Naive thymus-derived CD4-positive, alpha-beta T cell (primary cell): ENCODE measurements at regions of chr20 and their contacts with region 1.

Region 1: GRCh38 chr20:13661070-13661685 is 22.4 kb upstream of the TASP1 start:
- DNase-seq: no peak
- ATAC-seq: no peak
- H3K4me3 ChIP-seq: no peak overlapping the region
- H3K4me3 Mint-ChIP-seq: no peak overlapping the region
- H3K27ac ChIP-seq: no peak overlapping the region
- H3K27ac Mint-ChIP-seq: no peak overlapping the region
- H3K4me1 ChIP-seq: no peaks in the 10 kb centered on the region
- H3K4me1 Mint-ChIP-seq: no peaks in the 10 kb centered on the region
- H3K27me3 ChIP-seq: no peaks in the 10 kb centered on the region
- H3K27me3 Mint-ChIP-seq: peaks cover 0 to 39% (median 28%) of the 10 kb centered on the region in 5 donors

Region 2: GRCh38 chr20:13131688-13132087 is 529.5 kb before region 1 on chr20:
- CTCF ChIA-PET with region 1: no interaction called
- POLR2A ChIA-PET with region 1: no interaction called
- intact Hi-C with region 1: no loop called
- DNase-seq: no peak
- ATAC-seq: no peak
- H3K4me3 ChIP-seq: no peak overlapping the region
- H3K4me3 Mint-ChIP-seq: no peak overlapping the region
- H3K27ac ChIP-seq: no peak overlapping the region
- H3K27ac Mint-ChIP-seq: peak overlapping the region in 1 of 9 donors; percentile 13
- H3K4me1 ChIP-seq: no peaks in the 10 kb centered on the region
- H3K4me1 Mint-ChIP-seq: peaks cover 0 to 3% (median 0%) of the 10 kb centered on the region in 7 donors
- H3K27me3 ChIP-seq: no peaks in the 10 kb centered on the region
- H3K27me3 Mint-ChIP-seq: peaks cover 0 to 7% (median 0%) of the 10 kb centered on the region in 5 donors

Region 3: GRCh38 chr20:13610184-13610583 is 51.0 kb before region 1 on chr20:
- CTCF ChIA-PET with region 1: no interaction called
- POLR2A ChIA-PET with region 1: no interaction called
- intact Hi-C with region 1: loop called in 1 of 2 experiments (anchors 10 kb)
- DNase-seq: no peak
- ATAC-seq: peak; percentile 40
- H3K4me3 ChIP-seq: no peak overlapping the region
- H3K4me3 Mint-ChIP-seq: no peak overlapping the region
- H3K27ac ChIP-seq: no peak overlapping the region
- H3K27ac Mint-ChIP-seq: no peak overlapping the region
- H3K4me1 ChIP-seq: no peaks in the 10 kb centered on the region
- H3K4me1 Mint-ChIP-seq: peaks cover 0 to 6% (median 0%) of the 10 kb centered on the region in 7 donors
- H3K27me3 ChIP-seq: no peaks in the 10 kb centered on the region
- H3K27me3 Mint-ChIP-seq: no peaks in the 10 kb centered on the region

Region 4: DNA sequence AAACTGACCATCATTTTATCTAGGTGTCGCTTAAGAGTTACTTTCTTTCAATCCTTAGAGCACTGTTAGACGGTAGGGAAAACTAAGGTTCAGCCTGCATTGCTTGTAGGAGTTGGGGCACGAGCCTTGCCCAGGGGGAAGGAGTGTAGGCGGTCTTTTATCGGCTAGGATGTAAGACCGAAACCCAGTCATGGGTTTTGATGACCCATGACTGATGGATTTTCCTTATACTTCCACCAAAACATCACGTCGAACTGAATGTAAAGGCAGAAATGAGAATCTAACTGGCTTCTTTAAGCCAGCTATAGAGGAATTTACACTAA is 22.0 kb before region 1 on chr20:
- CTCF ChIA-PET with region 1: no interaction called
- POLR2A ChIA-PET with region 1: no interaction called
- intact Hi-C with region 1: no loop called
- DNase-seq: no peak
- ATAC-seq: no peak
- H3K4me3 ChIP-seq: peak overlapping the region; percentile 71
- H3K4me3 Mint-ChIP-seq: peak overlapping the region; percentile 85 to 94 (median 90)
- H3K27ac ChIP-seq: peak overlapping the region; percentile 27
- H3K27ac Mint-ChIP-seq: peak overlapping the region; percentile 37 to 95 (median 83)
- H3K4me1 ChIP-seq: peaks cover 0 to 7% of the 10 kb centered on the region in 2 donors
- H3K4me1 Mint-ChIP-seq: peaks cover 1 to 31% (median 27%) of the 10 kb centered on the region in 7 donors
- H3K27me3 ChIP-seq: no peaks in the 10 kb centered on the region
- H3K27me3 Mint-ChIP-seq: peaks cover 0 to 12% (median 6%) of the 10 kb centered on the region in 5 donors